Esophagus muscularis mucosa (tissue), 4 donors: ENCODE measurements at regions of chr9 and their contacts with region 1.

Region 1: GRCh38 chr9:33290247-33291030 is at the start of gene NFX1:
- DNase-seq: peak; percentile 100
- H3K4me3 ChIP-seq: peak within 1 kb of the TSS; percentile 78 to 89 (median 88)
- H3K27ac ChIP-seq: peak within 1 kb of the TSS; percentile 97 to 100 (median 99)
- H3K4me1 ChIP-seq: peaks cover 47 to 68% (median 62%) of the 10 kb centered on the region in 4 donors
- H3K27me3 ChIP-seq: no peaks in the 10 kb centered on the region
- CTCF ChIP-seq: peak in 1 of 3 experiments; percentile 21
- EP300 ChIP-seq: peak; percentile 37
- POLR2A ChIP-seq: peak; percentile 62
- total RNA-seq, gene NFX1: 32.1 to 49.4 (median 36.9) TPM

Region 2: GRCh38 chr9:32735476-32735875 is 555.0 kb before region 1 on chr9:
- intact Hi-C with region 1: no loop called
- DNase-seq: peak; percentile 5
- H3K4me3 ChIP-seq: no peak overlapping the region
- H3K27ac ChIP-seq: no peak overlapping the region
- H3K4me1 ChIP-seq: no peaks in the 10 kb centered on the region
- H3K27me3 ChIP-seq: no peaks in the 10 kb centered on the region
- CTCF ChIP-seq: no peak
- EP300 ChIP-seq: no peak
- POLR2A ChIP-seq: no peak

Region 3: DNA sequence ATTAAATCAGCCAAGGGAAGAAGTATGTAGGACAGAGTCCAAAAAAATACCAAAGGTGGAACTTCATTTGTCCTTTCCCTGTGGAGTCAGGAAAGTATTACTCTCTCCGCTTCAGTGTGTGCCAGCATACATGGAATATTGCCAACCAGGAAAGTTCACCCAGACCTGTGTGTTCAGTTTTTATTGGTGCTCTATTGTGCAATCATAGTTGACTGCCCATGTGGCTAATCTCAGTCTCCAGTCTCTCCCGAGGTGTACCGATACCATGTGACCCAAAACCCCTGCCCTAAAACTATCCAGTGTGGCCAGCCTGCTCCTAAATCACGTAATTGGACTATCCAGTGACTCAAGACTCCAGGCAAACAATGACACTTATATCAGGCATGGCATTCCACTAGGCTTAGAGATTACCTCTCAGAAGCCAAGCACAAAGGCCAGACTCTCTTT is 38.7 kb after region 1 on chr9:
- intact Hi-C with region 1: loop called (anchors 5 kb)
- DNase-seq: no peak
- H3K4me3 ChIP-seq: no peak overlapping the region
- H3K27ac ChIP-seq: peak overlapping the region; percentile 72 to 85 (median 80)
- H3K4me1 ChIP-seq: peaks cover 17 to 40% (median 28%) of the 10 kb centered on the region in 4 donors
- H3K27me3 ChIP-seq: no peaks in the 10 kb centered on the region
- CTCF ChIP-seq: no peak
- EP300 ChIP-seq: no peak
- POLR2A ChIP-seq: no peak

Region 4: GRCh38 chr9:33415501-33416038 is 125.1 kb after region 1 on chr9:
- intact Hi-C with region 1: loop called (anchors 5 kb)
- DNase-seq: no peak
- H3K4me3 ChIP-seq: no peak overlapping the region
- H3K27ac ChIP-seq: no peak overlapping the region
- H3K4me1 ChIP-seq: peaks cover 3 to 21% (median 13%) of the 10 kb centered on the region in 4 donors
- H3K27me3 ChIP-seq: peaks cover 0 to 18% (median 0%) of the 10 kb centered on the region in 4 donors
- CTCF ChIP-seq: peak; percentile 76 to 84 (median 77)
- EP300 ChIP-seq: no peak
- POLR2A ChIP-seq: no peak

Region 5: GRCh38 chr9:33473643-33474352 is 183.4 kb after region 1 on chr9 and contains the start of gene NOL6:
- intact Hi-C with region 1: loop called (anchors 10 kb)
- DNase-seq: peak; percentile 99
- H3K4me3 ChIP-seq: peak within 1 kb of the TSS; percentile 79 to 96 (median 93)
- H3K27ac ChIP-seq: peak within 1 kb of the TSS; percentile 69 to 82 (median 71)
- H3K4me1 ChIP-seq: peaks cover 16 to 29% (median 20%) of the 10 kb centered on the region in 4 donors
- H3K27me3 ChIP-seq: no peaks in the 10 kb centered on the region
- CTCF ChIP-seq: peak in 1 of 3 experiments; percentile 27
- EP300 ChIP-seq: no peak
- POLR2A ChIP-seq: peak; percentile 30
- total RNA-seq, gene NOL6: 12.7 to 21.0 (median 16.5) TPM